Mammary epithelial cell (primary cell): ENCODE measurements at regions of chr3 and their contacts with region 1.

Region 1: DNA sequence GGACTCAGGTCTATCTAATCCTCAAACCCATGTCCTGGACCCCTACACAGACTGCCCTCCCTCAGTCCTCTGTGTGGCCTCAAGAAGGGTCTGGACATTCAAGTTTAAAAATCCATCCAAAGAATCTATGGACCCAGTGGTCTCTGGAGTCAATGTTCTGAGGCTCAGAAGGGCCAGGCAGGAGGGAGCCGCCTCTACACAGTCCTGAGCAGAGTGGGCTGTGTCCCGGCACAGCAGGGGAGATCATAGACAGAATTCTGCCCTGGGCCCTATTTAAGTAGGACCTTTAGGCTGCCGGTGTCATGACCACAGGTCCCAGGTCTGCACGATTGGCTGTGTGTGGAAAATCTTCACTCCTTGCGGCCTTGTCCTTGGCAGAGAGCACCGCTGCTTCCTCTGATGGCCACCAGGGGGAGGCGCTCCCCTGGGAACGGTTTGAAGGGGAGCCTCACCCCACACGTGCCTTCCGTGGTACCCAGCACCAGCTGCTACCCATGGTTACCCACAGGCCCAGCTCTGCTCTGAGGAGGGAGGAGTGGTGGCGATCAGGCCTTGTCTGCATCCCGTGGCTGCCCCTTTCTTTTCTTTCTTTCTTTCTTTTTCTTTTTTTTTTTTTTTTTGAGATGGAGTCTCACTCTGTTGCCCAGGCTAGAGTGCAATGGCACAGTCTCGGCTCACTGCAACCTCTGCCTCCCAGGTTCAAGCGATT is 37.9 kb downstream of the CHRD start:
- DNase-seq: peak; percentile 51
- H3K4me3 ChIP-seq: no peak overlapping the region
- H3K27ac ChIP-seq: no peak overlapping the region
- H3K4me1 ChIP-seq: no peaks in the 10 kb centered on the region
- H3K27me3 ChIP-seq: no peaks in the 10 kb centered on the region
- CTCF ChIP-seq: peak; percentile 96 to 98

Region 2: GRCh38 chr3:183515968-183516851 is 901.6 kb before region 1 on chr3:
- CTCF ChIA-PET with region 1: no interaction called
- dilution Hi-C with region 1: no loop called
- in situ Hi-C with region 1: no loop called
- intact Hi-C with region 1: no loop called
- DNase-seq: no peak
- H3K4me3 ChIP-seq: no peak overlapping the region
- H3K27ac ChIP-seq: no peak overlapping the region
- H3K4me1 ChIP-seq: no peaks in the 10 kb centered on the region
- H3K27me3 ChIP-seq: no peaks in the 10 kb centered on the region
- CTCF ChIP-seq: no peak

Region 3: DNA sequence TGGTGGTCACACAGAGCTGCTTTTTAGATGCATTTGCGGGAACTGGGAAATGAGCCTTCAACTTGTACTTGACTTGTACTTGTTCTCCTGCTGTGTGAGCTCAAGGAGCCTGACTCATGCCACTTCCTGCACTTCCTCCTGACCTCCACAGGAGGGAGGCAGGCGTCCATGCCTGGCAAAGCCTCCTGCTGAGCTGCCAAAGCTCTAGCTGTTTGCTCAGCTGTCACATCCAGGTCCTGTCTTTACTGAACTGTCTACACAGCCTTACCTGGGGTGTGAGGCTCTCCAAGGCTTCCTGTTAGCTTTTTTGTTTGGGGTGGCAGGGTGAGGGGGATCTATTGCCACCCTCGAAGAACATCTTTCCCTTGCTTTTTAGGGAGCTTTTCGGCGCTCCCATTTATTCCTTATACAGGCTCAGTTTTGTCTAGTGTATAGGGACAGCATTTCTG is 46.2 kb before region 1 on chr3:
- CTCF ChIA-PET with region 1: interaction called, 8 read pairs
- dilution Hi-C with region 1: loop called (anchors 5 kb)
- in situ Hi-C with region 1: no loop called
- intact Hi-C with region 1: loop called (anchors 1 kb)
- DNase-seq: peak; percentile 73
- H3K4me3 ChIP-seq: no peak overlapping the region
- H3K27ac ChIP-seq: no peak overlapping the region
- H3K4me1 ChIP-seq: peaks cover 4% of the 10 kb centered on the region
- H3K27me3 ChIP-seq: no peaks in the 10 kb centered on the region
- CTCF ChIP-seq: peak; percentile 98 to 99

Region 4: GRCh38 chr3:184443380-184443779 is 25.6 kb after region 1 on chr3:
- CTCF ChIA-PET with region 1: no interaction called
- dilution Hi-C with region 1: no loop called
- in situ Hi-C with region 1: no loop called
- intact Hi-C with region 1: loop called (anchors 1 kb)
- DNase-seq: peak; percentile 39
- H3K4me3 ChIP-seq: no peak overlapping the region
- H3K27ac ChIP-seq: no peak overlapping the region
- H3K4me1 ChIP-seq: peaks cover 9% of the 10 kb centered on the region
- H3K27me3 ChIP-seq: no peaks in the 10 kb centered on the region
- CTCF ChIP-seq: no peak

Region 5: GRCh38 chr3:184513276-184514170 is 95.8 kb after region 1 on chr3:
- CTCF ChIA-PET with region 1: no interaction called
- dilution Hi-C with region 1: no loop called
- in situ Hi-C with region 1: no loop called
- intact Hi-C with region 1: loop called (anchors 1 kb)
- DNase-seq: peak; percentile 63
- H3K4me3 ChIP-seq: peak overlapping the region; percentile 41 to 62 (median 54)
- H3K27ac ChIP-seq: no peak overlapping the region
- H3K4me1 ChIP-seq: peaks cover 6% of the 10 kb centered on the region
- H3K27me3 ChIP-seq: peaks cover 3% of the 10 kb centered on the region
- CTCF ChIP-seq: peak; percentile 63 to 85

Region 6: GRCh38 chr3:184543843-184544512 is 126.2 kb after region 1 on chr3:
- CTCF ChIA-PET with region 1: no interaction called
- dilution Hi-C with region 1: no loop called
- in situ Hi-C with region 1: no loop called
- intact Hi-C with region 1: loop called (anchors 1 kb)
- DNase-seq: peak; percentile 72
- H3K4me3 ChIP-seq: no peak overlapping the region
- H3K27ac ChIP-seq: no peak overlapping the region
- H3K4me1 ChIP-seq: peaks cover 2% of the 10 kb centered on the region
- H3K27me3 ChIP-seq: no peaks in the 10 kb centered on the region
- CTCF ChIP-seq: peak; percentile 84 to 86

Region 7: DNA sequence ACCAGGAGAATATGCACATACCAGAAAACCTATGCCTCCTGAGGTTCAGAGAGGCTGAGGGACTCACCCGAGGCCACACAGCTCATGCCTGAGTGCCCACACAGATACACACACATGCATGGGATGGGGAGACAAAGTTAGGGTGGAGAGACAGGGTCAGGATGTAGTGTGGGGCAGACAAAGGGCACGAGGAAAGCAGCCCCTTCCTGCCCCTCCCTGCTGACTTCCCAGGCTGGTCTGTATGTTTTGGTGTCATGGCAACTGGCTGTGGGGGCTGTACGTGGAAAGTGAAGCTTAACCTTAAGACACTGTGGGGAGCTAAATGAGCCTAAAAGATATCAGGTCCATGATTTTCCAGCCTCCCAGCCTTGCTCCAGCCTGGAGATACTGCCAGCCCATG is 201.6 kb after region 1 on chr3:
- CTCF ChIA-PET with region 1: no interaction called
- dilution Hi-C with region 1: no loop called
- in situ Hi-C with region 1: no loop called
- intact Hi-C with region 1: no loop called
- DNase-seq: no peak
- H3K4me3 ChIP-seq: no peak overlapping the region
- H3K27ac ChIP-seq: no peak overlapping the region
- H3K4me1 ChIP-seq: peaks cover 14% of the 10 kb centered on the region
- H3K27me3 ChIP-seq: no peaks in the 10 kb centered on the region
- CTCF ChIP-seq: no peak

Region 8: DNA sequence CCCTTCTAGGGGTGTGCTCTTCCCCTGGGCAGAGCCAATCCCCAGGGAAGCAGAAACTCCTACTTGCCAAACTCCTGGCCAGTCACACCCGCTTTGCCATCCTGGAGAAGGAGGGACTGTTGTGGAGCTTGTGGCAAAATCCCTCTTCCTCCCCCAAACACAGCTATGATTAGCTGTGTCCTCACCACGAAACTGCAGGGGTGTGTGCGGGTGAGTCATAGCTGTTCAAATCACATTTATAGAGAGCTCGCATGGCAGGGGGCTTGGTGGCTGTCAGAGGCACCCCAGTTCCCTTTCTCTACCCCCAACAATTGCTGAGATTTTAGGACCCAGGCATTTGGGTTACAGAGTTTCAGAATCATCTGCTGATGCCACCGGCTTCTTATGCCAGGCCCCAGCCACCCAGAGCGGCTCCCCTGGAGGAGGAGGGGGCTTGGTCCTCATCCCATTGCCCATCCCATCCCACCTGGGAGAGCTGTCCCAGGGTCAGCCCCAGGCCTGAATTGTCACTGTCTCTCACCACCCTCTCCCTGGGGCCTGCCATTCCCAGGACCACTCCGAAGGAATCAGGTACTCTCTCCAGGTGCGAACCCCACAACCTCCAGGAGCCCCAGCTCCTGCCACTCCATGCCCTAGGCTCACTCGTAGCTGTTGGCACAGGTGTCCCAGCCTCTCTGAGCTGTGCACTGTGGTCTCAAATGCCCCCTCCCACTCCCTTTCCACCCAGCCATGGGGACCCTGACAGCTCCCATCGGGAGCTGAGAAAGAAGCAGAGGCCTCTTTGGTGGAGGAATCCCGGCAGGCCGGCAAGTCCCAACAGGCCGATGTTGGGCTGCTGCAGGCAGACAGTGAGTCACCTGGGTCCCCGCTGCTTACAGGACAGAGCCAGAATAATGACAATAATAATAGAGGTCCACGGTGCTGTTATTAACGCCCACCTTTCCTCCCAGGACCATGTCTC is 323.0 kb after region 1 on chr3:
- CTCF ChIA-PET with region 1: interaction called, 18 read pairs
- dilution Hi-C with region 1: no loop called
- in situ Hi-C with region 1: no loop called
- intact Hi-C with region 1: no loop called
- DNase-seq: peak; percentile 99
- H3K4me3 ChIP-seq: peak overlapping the region; percentile 12 to 36 (median 31)
- H3K27ac ChIP-seq: peak overlapping the region; percentile 99
- H3K4me1 ChIP-seq: peaks cover 51% of the 10 kb centered on the region
- H3K27me3 ChIP-seq: no peaks in the 10 kb centered on the region
- CTCF ChIP-seq: no peak